ENCODE measurements at regions of chr1 and their contacts with region 1.

Region 1: GRCh38 chr1:32413507-32414185 is 19.4 kb upstream of the BSDC1 start:
- DNase-seq: peak; percentile 91
- H3K4me3 ChIP-seq: no peak overlapping the region
- H3K27ac ChIP-seq: no peak overlapping the region
- H3K4me1 ChIP-seq: peaks cover 5% of the 10 kb centered on the region
- CTCF ChIP-seq: peak; percentile 95

Region 2: DNA sequence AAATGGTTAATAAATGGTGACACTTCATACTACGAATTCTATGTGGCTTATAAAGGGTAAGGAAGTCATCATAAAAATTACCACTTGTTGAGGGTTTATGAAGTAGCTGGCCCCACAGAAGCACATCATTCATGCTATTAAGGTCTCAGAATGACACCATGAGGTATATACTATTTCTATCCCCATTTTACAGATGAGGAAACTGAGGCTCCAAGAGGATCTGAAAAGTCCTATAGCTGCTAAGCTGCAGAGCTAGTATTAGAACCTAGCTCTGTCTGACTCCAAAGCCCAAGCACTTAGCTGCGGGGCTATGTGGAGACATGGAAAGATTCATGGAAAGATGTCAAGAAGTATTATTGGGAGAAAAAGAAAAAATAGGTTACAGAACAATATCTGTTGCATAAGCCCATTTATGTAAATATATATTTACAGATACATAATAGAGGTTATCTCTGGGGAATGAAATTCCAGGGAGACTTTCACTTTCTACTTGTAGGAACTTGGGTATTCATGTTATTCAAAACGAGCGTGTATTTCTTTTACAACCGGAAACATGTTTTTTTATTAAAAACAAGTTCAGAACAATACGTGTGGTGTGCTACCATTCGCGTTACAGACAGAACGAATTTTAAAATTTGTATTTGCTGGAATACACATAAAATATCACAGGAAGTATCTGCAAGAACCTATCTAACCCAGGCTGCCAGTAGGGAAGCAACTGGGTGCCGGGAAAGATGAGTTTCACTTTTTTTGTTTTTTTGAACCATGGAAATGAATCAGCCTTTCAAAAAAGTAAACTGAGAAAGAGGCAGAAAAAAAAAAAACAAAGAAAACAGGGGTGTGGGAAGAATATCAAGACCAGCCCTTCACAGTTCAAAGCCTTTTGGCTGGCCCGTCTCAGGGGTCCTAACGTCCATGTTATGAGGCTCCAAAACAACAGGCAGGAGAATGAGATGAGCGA is 611.2 kb before region 1 on chr1:
- CTCF ChIA-PET with region 1: no interaction called
- POLR2A ChIA-PET with region 1: no interaction called
- intact Hi-C with region 1: loop called (anchors 10 kb)
- DNase-seq: no peak
- H3K4me3 ChIP-seq: peak overlapping the region; percentile 25
- H3K27ac ChIP-seq: no peak overlapping the region
- H3K4me1 ChIP-seq: peaks cover 17% of the 10 kb centered on the region
- CTCF ChIP-seq: no peak

Region 3: GRCh38 chr1:32200226-32201010 is 213.2 kb before region 1 on chr1 and contains the start of gene CCDC28B:
- CTCF ChIA-PET with region 1: no interaction called
- POLR2A ChIA-PET with region 1: no interaction called
- intact Hi-C with region 1: loop called (anchors 1 kb)
- DNase-seq: peak; percentile 61
- H3K4me3 ChIP-seq: peak within 1 kb of the TSS; percentile 73
- H3K27ac ChIP-seq: peak within 1 kb of the TSS; percentile 56
- H3K4me1 ChIP-seq: peaks cover 44% of the 10 kb centered on the region
- CTCF ChIP-seq: no peak
- total RNA-seq, gene CCDC28B: 28.3 and 32.8 TPM in 2 replicates

Region 4: GRCh38 chr1:32215629-32216480 is 197.8 kb before region 1 on chr1:
- CTCF ChIA-PET with region 1: no interaction called
- POLR2A ChIA-PET with region 1: no interaction called
- intact Hi-C with region 1: loop called (anchors 1 kb)
- DNase-seq: peak; percentile 81
- H3K4me3 ChIP-seq: no peak overlapping the region
- H3K27ac ChIP-seq: no peak overlapping the region
- H3K4me1 ChIP-seq: peaks cover 11% of the 10 kb centered on the region
- CTCF ChIP-seq: peak; percentile 95